ENCODE measurements at regions of chr17 and their contacts with region 1.

Region 1: GRCh38 chr17:30344283-30345088 is 10.6 kb upstream of the TMIGD1 start:
- DNase-seq: peak; percentile 61
- H3K4me3 Mint-ChIP-seq: peak overlapping the region; percentile 49
- H3K27ac Mint-ChIP-seq: peak overlapping the region; percentile 80
- H3K4me1 Mint-ChIP-seq: peaks cover 35% of the 10 kb centered on the region
- H3K27me3 Mint-ChIP-seq: no peaks in the 10 kb centered on the region
- CTCF ChIP-seq: no peak

Region 2: GRCh38 chr17:30132615-30133014 is 211.9 kb before region 1 on chr17:
- CTCF ChIA-PET with region 1: no interaction called
- intact Hi-C with region 1: no loop called
- DNase-seq: no peak
- H3K4me3 Mint-ChIP-seq: no peak overlapping the region
- H3K27ac Mint-ChIP-seq: no peak overlapping the region
- H3K4me1 Mint-ChIP-seq: no peaks in the 10 kb centered on the region
- H3K27me3 Mint-ChIP-seq: no peaks in the 10 kb centered on the region
- CTCF ChIP-seq: no peak

Region 3: DNA sequence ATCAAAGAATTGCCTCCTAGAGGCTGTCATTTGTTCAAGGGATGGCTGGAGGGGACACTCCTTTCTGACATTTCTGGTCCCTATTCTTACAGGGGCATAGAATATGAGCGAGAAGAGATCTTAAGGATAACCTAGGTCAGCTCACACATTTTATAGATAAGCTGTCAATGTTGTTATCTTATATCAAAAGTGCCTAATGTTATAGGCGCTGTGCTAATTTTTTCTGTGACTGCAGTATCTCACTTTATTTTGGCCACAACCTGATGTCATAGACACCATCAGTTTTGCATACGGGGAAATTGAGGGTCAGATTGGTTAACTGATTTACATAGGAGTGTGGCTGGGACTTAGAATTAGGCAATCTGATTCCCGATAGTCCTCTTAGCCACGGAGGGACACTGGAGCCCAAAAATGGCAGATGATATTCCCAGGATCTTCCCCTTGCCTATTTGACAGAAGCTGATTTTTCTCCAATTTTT is 35.5 kb after region 1 on chr17:
- CTCF ChIA-PET with region 1: no interaction called
- intact Hi-C with region 1: loop called (anchors 2 kb)
- DNase-seq: no peak
- H3K4me3 Mint-ChIP-seq: peak overlapping the region; percentile 85
- H3K27ac Mint-ChIP-seq: peak overlapping the region; percentile 56
- H3K4me1 Mint-ChIP-seq: peaks cover 51% of the 10 kb centered on the region
- H3K27me3 Mint-ChIP-seq: no peaks in the 10 kb centered on the region
- CTCF ChIP-seq: no peak

Region 4: GRCh38 chr17:30391534-30391933 is 47.0 kb after region 1 on chr17:
- CTCF ChIA-PET with region 1: no interaction called
- intact Hi-C with region 1: no loop called
- DNase-seq: no peak
- H3K4me3 Mint-ChIP-seq: no peak overlapping the region
- H3K27ac Mint-ChIP-seq: no peak overlapping the region
- H3K4me1 Mint-ChIP-seq: peaks cover 26% of the 10 kb centered on the region
- H3K27me3 Mint-ChIP-seq: no peaks in the 10 kb centered on the region
- CTCF ChIP-seq: no peak

Region 5: GRCh38 chr17:30433514-30433913 is 89.0 kb after region 1 on chr17:
- CTCF ChIA-PET with region 1: no interaction called
- intact Hi-C with region 1: loop called (anchors 10 kb)
- DNase-seq: peak; percentile 68
- H3K4me3 Mint-ChIP-seq: no peak overlapping the region
- H3K27ac Mint-ChIP-seq: peak overlapping the region; percentile 61
- H3K4me1 Mint-ChIP-seq: peaks cover 14% of the 10 kb centered on the region
- H3K27me3 Mint-ChIP-seq: no peaks in the 10 kb centered on the region
- CTCF ChIP-seq: no peak

Region 6: GRCh38 chr17:30840771-30841170 is 496.3 kb after region 1 on chr17:
- CTCF ChIA-PET with region 1: no interaction called
- intact Hi-C with region 1: no loop called
- DNase-seq: no peak
- H3K4me3 Mint-ChIP-seq: no peak overlapping the region
- H3K27ac Mint-ChIP-seq: no peak overlapping the region
- H3K4me1 Mint-ChIP-seq: no peaks in the 10 kb centered on the region
- H3K27me3 Mint-ChIP-seq: no peaks in the 10 kb centered on the region
- CTCF ChIP-seq: no peak